ENCODE measurements at regions of chr14 and their contacts with region 1.

Region 1: GRCh38 chr14:21557084-21557901 is 22.6 kb downstream of the OR10G3 start:
- DNase-seq: no peak

Region 2: GRCh38 chr14:21502926-21503325 is 54.4 kb before region 1 on chr14:
- intact Hi-C with region 1: loop called (anchors 5 kb)
- DNase-seq: no peak

Measured in cardiac septum (tissue), 1 donor.